A673 (cell line): ENCODE measurements at regions of chr14 and their contacts with region 1.

Region 1: DNA sequence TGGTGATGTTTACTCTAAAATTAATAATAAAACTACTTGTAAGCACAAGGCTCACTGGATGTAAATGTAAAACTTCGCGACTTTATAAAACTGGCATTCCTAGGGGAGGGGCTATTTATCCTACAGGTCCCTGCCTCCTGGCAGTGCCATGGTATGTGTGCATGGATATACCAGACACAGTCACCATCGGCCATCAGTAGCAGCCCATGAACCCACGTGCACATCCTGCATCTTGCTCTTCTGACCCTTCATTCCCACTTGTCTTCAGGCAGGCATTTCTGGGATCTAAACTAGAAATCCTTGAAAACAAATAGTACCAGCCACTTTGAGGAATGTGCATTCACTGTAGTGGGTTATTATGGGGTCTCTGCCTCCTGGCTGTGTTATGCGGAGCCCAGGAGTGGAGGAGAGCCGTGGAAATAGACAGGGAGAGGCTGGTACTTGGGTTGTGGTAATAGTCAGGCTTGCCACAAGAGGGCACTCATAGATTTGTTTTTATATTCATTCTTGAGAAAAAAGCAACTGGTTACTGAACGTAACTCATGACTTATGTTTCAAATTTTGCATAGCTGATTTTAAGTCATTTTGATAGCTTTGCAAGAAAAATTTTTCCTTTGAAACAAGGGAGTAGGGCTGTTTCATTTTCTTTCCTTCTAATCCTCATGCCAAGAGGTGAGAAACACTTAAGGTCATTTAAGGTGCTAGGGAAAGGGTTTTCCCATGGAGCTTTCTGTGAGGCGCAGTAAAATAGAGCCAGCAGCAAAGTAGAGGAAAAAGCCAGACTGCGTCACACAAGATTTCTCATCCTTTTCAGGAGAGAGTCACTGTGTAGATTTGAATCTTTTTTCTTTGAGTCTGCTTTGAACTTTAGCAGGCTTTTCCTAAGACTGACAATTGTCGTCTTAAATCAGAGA is 17.4 kb upstream of the GALNT16 start:
- DNase-seq: peak; percentile 72
- H3K4me3 ChIP-seq: no peak overlapping the region
- H3K27ac ChIP-seq: no peak overlapping the region
- H3K4me1 ChIP-seq: no peaks in the 10 kb centered on the region
- H3K27me3 ChIP-seq: no peaks in the 10 kb centered on the region
- CTCF ChIP-seq: peak; percentile 80

Region 2: GRCh38 chr14:68621400-68622365 is 620.9 kb before region 1 on chr14:
- CTCF ChIA-PET with region 1: no interaction called
- POLR2A ChIA-PET with region 1: no interaction called
- intact Hi-C with region 1: no loop called
- DNase-seq: no peak
- H3K4me3 ChIP-seq: no peak overlapping the region
- H3K27ac ChIP-seq: no peak overlapping the region
- H3K4me1 ChIP-seq: no peaks in the 10 kb centered on the region
- H3K27me3 ChIP-seq: no peaks in the 10 kb centered on the region
- CTCF ChIP-seq: no peak

Region 3: GRCh38 chr14:69090187-69090789 is 152.3 kb before region 1 on chr14:
- CTCF ChIA-PET with region 1: no interaction called
- POLR2A ChIA-PET with region 1: no interaction called
- intact Hi-C with region 1: no loop called
- DNase-seq: peak; percentile 19
- H3K4me3 ChIP-seq: no peak overlapping the region
- H3K27ac ChIP-seq: no peak overlapping the region
- H3K4me1 ChIP-seq: peaks cover 4% of the 10 kb centered on the region
- H3K27me3 ChIP-seq: no peaks in the 10 kb centered on the region
- CTCF ChIP-seq: peak; percentile 77

Region 4: DNA sequence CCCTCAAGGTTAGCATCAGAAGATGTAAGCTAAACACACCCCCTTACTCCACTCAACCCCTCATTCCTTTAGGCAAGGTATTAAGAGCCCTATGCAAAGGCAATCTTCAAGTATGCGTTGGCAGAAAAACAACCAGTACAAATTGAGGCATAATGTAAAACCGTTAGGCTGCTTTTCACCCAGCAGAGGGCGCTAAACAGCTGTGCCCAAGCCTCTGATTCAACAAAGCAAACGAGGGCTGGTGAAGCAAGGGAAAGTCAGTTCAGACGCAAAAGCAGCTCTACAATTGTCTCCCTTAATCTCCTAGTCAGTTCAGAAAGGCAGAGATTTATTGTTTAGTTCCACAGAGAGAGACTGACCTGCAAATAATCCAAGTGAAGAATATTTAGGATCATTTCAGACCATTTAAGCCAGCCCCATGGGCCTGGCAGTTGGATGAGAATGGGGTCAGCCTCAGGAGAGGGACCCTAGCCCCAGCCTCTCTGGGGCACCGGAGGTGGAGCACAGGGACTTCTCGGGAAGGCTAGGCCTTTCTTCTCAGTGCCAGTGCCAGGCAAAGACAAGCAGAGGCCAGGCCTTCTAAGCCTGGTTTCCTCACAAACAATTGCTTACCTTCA is 113.2 kb before region 1 on chr14:
- CTCF ChIA-PET with region 1: interaction called, 9 read pairs
- POLR2A ChIA-PET with region 1: no interaction called
- intact Hi-C with region 1: loop called (anchors 2 kb)
- DNase-seq: peak; percentile 91
- H3K4me3 ChIP-seq: no peak overlapping the region
- H3K27ac ChIP-seq: peak overlapping the region; percentile 47
- H3K4me1 ChIP-seq: peaks cover 38% of the 10 kb centered on the region
- H3K27me3 ChIP-seq: no peaks in the 10 kb centered on the region
- CTCF ChIP-seq: peak; percentile 97

Region 5: DNA sequence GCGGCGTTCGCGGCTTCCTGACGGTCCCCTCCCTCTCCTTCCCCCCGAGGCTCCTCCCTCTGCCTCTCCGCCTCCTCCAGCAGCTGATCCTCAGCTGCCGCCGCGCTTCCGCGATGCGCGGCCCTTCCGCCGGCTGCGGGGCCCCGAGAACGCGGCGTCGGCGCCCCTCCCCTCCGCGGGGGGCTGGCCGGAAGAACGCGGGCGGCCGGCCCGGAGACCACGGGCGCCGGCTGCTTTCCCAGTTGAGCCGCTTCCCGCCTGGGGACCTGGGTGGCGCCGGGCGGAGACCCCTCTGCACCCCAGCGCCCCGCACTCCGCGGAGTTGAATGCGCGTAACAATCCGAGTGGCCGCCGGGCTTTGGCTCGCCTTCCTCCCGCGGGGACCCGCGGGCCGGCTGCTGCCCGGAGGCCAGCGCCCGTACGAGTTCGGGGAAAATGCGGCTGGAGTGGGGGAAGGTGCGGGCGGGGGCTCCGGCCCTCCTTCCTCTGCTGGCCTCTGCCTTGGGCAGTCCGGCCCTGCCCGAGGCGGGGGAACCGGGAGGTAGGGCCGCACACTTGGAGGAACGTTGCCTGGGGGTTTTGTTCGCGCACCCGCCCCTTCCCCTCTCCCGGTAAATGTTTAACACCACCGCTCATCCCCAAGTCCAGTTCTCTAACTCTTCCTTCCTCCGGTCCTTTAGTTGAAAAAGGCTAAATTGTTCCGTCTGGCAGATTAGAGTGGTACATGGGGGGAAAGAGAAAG is 89.3 kb before region 1 on chr14:
- CTCF ChIA-PET with region 1: no interaction called
- POLR2A ChIA-PET with region 1: no interaction called
- intact Hi-C with region 1: loop called (anchors 5 kb)
- DNase-seq: peak; percentile 94
- H3K4me3 ChIP-seq: peak overlapping the region; percentile 70
- H3K27ac ChIP-seq: peak overlapping the region; percentile 88
- H3K4me1 ChIP-seq: no peaks in the 10 kb centered on the region
- H3K27me3 ChIP-seq: peaks cover 19% of the 10 kb centered on the region
- CTCF ChIP-seq: no peak

Region 6: GRCh38 chr14:69460093-69460701 is 217.6 kb after region 1 on chr14:
- CTCF ChIA-PET with region 1: interaction called, 10 read pairs
- POLR2A ChIA-PET with region 1: no interaction called
- intact Hi-C with region 1: loop called (anchors 1 kb)
- DNase-seq: peak; percentile 86
- H3K4me3 ChIP-seq: no peak overlapping the region
- H3K27ac ChIP-seq: no peak overlapping the region
- H3K4me1 ChIP-seq: no peaks in the 10 kb centered on the region
- H3K27me3 ChIP-seq: no peaks in the 10 kb centered on the region
- CTCF ChIP-seq: peak; percentile 89

Region 7: DNA sequence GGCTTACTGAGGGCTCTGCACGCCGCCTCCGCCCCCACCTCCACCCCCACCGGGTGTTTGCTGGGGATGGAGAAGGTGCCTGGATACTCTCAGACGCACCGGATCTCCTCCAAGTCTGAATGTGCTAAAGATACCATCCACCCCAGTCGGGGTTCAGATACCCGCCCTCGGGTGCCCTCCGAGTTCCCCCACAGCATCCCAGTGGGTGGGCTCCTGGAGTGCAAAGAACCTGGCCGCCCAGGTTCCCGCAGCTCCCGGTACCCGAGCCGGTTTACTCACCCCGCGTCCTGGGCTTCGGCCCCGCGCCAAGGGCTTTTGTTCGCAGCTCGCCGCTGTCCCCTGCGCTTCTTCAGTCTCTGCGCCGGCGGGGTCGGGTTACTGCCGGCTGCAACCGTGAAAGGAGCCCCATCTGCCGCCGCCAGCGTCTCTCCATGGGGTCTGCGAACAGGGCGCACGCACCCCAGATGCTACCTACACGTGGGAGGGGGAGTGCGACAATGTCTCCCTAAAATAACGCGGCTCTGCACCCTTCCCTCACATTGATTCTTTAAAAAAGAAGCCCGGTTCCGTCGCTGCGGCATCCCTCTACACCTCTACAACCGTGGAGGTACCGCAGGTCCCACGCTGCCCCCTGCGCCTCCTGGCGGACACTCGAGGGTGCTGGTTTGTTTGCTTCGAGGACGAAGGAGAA is 331.8 kb after region 1 on chr14 and contains the start of gene CCDC177:
- CTCF ChIA-PET with region 1: no interaction called
- POLR2A ChIA-PET with region 1: no interaction called
- intact Hi-C with region 1: loop called (anchors 2 kb)
- DNase-seq: peak; percentile 74
- H3K4me3 ChIP-seq: peak within 1 kb of the TSS; percentile 32
- H3K27ac ChIP-seq: no peak within 1 kb of the TSS
- H3K4me1 ChIP-seq: peaks cover 21% of the 10 kb centered on the region
- H3K27me3 ChIP-seq: peaks cover 87% of the 10 kb centered on the region
- CTCF ChIP-seq: peak; percentile 99
- total RNA-seq, gene CCDC177: 0.09 TPM in 1 of 2 replicates, not detected in the other

Region 8: DNA sequence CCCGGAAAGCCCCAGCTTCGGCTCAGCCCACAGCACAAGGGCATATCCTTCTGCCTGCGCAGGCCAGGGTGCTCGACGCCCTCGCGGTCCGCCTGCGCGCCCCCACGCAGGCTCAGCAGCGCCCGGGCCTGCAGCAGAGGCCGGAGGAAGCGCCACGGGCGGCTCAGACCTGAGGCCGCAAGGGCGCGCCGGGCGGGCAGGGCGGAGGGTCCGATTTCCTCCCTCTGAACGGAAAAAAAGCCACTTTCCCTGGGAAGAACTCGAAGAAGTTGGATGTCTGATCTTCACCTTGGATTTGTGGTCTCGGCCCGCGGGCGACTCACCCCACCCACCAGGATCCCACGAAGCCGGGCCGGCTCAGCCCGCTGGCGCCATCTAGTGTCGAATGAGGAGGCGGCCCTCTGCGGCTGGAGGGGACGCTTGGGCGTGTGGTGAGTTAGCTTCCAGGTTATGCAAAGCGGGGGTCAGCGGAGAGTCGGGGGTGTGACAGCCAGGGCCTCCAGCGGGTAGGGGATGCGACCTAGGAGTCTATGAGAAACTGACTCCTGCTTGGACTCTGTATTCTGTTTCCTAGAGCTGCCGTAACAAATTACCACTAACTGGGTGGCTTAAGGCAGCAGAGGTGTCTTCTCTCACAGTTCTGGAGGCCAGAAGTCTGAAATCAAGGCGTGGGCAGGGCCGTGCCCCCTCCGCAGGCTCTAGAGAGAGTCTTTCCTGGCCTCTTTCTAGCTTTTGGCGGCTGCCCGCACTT is 484.4 kb after region 1 on chr14:
- CTCF ChIA-PET with region 1: no interaction called
- POLR2A ChIA-PET with region 1: no interaction called
- intact Hi-C with region 1: loop called (anchors 10 kb)
- DNase-seq: peak; percentile 85
- H3K4me3 ChIP-seq: peak overlapping the region; percentile 35
- H3K27ac ChIP-seq: no peak overlapping the region
- H3K4me1 ChIP-seq: peaks cover 3% of the 10 kb centered on the region
- H3K27me3 ChIP-seq: no peaks in the 10 kb centered on the region
- CTCF ChIP-seq: peak; percentile 96